ENCODE measurements at regions of chr7 and their contacts with region 1.

Region 1: DNA sequence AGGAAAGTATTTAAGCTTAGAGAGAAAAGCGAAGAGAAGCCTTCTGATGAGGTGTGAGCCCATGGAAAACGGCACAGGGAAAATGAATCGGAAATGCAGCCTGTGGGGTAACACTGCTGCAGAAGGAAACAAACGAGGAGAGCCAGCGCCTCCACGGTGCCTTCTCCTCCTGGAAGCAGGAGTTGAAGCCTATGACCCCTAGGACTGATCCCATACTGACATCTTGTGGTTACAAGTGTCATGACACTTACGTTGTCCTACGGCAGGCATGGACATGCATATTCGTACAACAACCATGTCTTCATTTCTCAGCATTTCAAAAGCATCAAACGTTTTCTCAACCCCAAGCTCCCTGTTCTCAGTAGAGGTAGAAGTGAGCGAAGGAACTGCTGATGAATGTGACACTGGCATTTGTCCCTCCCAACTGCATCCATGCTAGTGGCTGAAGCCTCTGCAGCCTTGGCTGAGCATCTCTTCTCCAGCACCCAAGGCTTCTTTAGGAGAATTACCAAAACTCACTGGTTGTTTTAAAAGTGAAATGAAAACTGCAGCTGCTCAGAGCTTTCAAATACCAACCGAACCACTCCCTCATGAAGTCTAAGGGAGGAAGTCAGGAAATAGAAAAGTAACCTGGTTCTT is 160.2 kb downstream of the JAZF1 start:
- DNase-seq: peak; percentile 80
- H3K4me3 ChIP-seq: no peak overlapping the region
- H3K27ac ChIP-seq: no peak overlapping the region
- H3K4me1 ChIP-seq: no peaks in the 10 kb centered on the region
- H3K27me3 ChIP-seq: peaks cover 73% of the 10 kb centered on the region
- CTCF ChIP-seq: peak; percentile 72

Region 2: GRCh38 chr7:27793780-27794179 is 226.6 kb before region 1 on chr7:
- CTCF ChIA-PET with region 1: no interaction called
- POLR2A ChIA-PET with region 1: no interaction called
- intact Hi-C with region 1: loop called (anchors 5 kb)
- DNase-seq: no peak
- H3K4me3 ChIP-seq: no peak overlapping the region
- H3K27ac ChIP-seq: no peak overlapping the region
- H3K4me1 ChIP-seq: no peaks in the 10 kb centered on the region
- H3K27me3 ChIP-seq: no peaks in the 10 kb centered on the region
- CTCF ChIP-seq: no peak

Region 3: GRCh38 chr7:27921081-27921836 is 99.2 kb before region 1 on chr7:
- CTCF ChIA-PET with region 1: no interaction called
- POLR2A ChIA-PET with region 1: no interaction called
- intact Hi-C with region 1: loop called (anchors 2 kb)
- DNase-seq: peak; percentile 83
- H3K4me3 ChIP-seq: no peak overlapping the region
- H3K27ac ChIP-seq: no peak overlapping the region
- H3K4me1 ChIP-seq: peaks cover 3% of the 10 kb centered on the region
- H3K27me3 ChIP-seq: peaks cover 78% of the 10 kb centered on the region
- CTCF ChIP-seq: peak; percentile 72

Measured in A673 (cell line).